Caco-2 (cell line): ENCODE measurements at regions of chr13 and their contacts with region 1.

Region 1: DNA sequence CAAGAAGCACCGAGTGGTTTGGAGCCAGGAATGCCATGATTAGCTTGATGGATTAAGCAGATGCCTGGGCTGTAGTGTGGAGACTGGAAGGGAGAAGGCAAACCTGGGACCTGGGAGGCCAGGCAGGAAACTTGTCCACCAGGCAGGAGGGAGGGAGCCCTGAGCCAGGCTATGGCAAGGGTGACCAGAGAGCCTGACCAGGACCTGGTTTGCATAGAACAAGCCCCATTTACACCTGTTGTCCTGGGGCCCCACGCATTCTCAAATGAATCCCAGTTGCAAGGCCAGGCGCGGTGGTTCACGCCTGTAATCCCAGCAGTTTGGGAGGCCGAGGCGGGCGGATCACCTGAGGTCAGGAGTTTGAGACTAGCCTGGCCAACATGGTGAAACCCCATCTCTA is 50.2 kb upstream of the LATS2 start:
- DNase-seq: no peak
- H3K4me3 ChIP-seq: no peak overlapping the region
- H3K4me3 Mint-ChIP-seq: no peak overlapping the region
- H3K27ac Mint-ChIP-seq: no peak overlapping the region
- H3K4me1 ChIP-seq: no peaks in the 10 kb centered on the region
- H3K4me1 Mint-ChIP-seq: no peaks in the 10 kb centered on the region
- H3K27me3 ChIP-seq: no peaks in the 10 kb centered on the region
- H3K27me3 Mint-ChIP-seq: no peaks in the 10 kb centered on the region
- CTCF ChIP-seq: no peak

Region 2: DNA sequence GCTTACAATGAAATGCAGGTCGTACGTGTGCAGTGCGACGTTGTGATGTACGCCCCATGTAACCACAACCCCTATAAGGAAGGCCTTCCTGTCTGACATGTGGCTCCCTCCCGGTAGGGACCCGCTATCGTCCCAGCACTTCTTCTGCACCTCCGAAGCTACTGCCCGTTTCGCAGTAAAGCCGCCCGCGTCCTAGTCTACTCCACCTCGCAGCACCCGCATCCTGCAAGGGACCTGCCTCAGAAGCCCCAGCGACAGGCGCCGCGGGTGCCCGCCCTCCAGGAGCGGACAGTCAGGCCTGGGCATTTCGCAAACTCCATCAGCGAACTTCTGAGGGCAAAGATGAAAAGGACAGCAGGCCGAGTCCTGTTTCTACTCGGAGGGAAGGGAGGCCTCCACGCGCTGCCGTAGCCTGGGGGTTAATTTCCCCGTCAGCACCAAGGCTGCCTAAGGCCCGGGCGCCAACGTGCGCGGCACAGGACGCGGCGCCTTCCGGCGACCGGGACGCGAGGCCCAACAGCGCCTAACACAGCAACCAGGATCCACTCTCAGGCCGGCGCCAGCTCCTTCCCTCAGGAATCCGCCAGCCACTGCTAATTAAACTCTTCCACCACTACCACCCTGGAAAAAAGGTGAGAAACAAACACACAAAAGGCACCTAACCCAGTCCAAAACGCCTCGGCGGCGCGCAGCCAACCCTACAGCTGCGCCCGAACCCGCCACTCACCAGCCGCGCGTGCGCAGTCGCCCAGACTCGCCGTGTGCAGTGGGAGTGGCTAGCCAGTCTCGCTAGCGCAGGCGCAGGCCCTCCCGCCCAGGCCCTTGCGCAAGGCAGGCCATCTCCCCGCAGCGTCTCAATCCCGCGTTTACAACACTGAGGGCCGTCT is 338.1 kb before region 1 on chr13 and contains the start of gene EEF1AKMT1:
- CTCF ChIA-PET with region 1: no interaction called
- POLR2A ChIA-PET with region 1: no interaction called
- intact Hi-C with region 1: no loop called
- DNase-seq: peak; percentile 95 to 98
- H3K4me3 ChIP-seq: peak within 1 kb of the TSS; percentile 58
- H3K4me3 Mint-ChIP-seq: peak within 1 kb of the TSS; percentile 87
- H3K27ac Mint-ChIP-seq: peak within 1 kb of the TSS; percentile 97
- H3K4me1 ChIP-seq: peaks cover 9% of the 10 kb centered on the region
- H3K4me1 Mint-ChIP-seq: peaks cover 16% of the 10 kb centered on the region
- H3K27me3 ChIP-seq: no peaks in the 10 kb centered on the region
- H3K27me3 Mint-ChIP-seq: no peaks in the 10 kb centered on the region
- CTCF ChIP-seq: no peak
- total RNA-seq, gene EEF1AKMT1: 8.6 and 9.6 TPM in 2 replicates

Region 3: DNA sequence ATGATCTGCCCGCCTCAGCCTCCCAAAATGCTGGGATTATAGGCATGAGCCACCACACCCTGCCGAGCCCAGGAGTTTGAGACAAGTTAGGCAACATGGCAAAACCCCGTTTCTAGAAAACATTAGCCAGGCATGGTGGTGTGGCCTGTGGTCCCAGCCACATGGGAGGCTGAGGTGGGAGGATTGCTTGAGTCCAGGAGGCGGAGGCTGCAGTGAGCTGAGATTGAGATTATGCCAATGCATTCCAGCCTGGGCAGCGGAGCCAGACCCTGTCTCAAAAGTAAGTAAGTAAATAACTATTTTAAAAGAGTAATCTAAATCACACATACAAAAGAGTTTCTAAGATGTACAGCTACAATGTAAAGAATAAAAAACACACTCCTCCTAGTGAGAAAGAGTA is 22.9 kb after region 1 on chr13:
- CTCF ChIA-PET with region 1: no interaction called
- POLR2A ChIA-PET with region 1: no interaction called
- intact Hi-C with region 1: loop called (anchors 2 kb)
- DNase-seq: no peak
- H3K4me3 ChIP-seq: no peak overlapping the region
- H3K4me3 Mint-ChIP-seq: no peak overlapping the region
- H3K27ac Mint-ChIP-seq: no peak overlapping the region
- H3K4me1 ChIP-seq: peaks cover 3% of the 10 kb centered on the region; the same call in 1 of the 2 replicates
- H3K4me1 Mint-ChIP-seq: peaks cover 13% of the 10 kb centered on the region
- H3K27me3 ChIP-seq: no peaks in the 10 kb centered on the region
- H3K27me3 Mint-ChIP-seq: no peaks in the 10 kb centered on the region
- CTCF ChIP-seq: no peak

Region 4: GRCh38 chr13:21181671-21182070 is 70.1 kb after region 1 on chr13:
- CTCF ChIA-PET with region 1: no interaction called
- POLR2A ChIA-PET with region 1: interaction called, 3 read pairs
- intact Hi-C with region 1: loop called (anchors 2 kb)
- DNase-seq: no peak
- H3K4me3 ChIP-seq: no peak overlapping the region
- H3K4me3 Mint-ChIP-seq: no peak overlapping the region
- H3K27ac Mint-ChIP-seq: no peak overlapping the region
- H3K4me1 ChIP-seq: peaks cover 6% of the 10 kb centered on the region; the same call in 1 of the 2 replicates
- H3K4me1 Mint-ChIP-seq: peaks cover 7% of the 10 kb centered on the region
- H3K27me3 ChIP-seq: no peaks in the 10 kb centered on the region
- H3K27me3 Mint-ChIP-seq: no peaks in the 10 kb centered on the region
- CTCF ChIP-seq: no peak